MCF 10A (cell line): ENCODE measurements at regions of chr1 and their contacts with region 1.

Region 1: GRCh38 chr1:227318003-227318852 is at the start of gene CDC42BPA:
- DNase-seq: peak; percentile 96
- H3K4me3 Mint-ChIP-seq: peak within 1 kb of the TSS; percentile 86
- H3K27ac Mint-ChIP-seq: peak within 1 kb of the TSS; percentile 98
- H3K4me1 Mint-ChIP-seq: peaks cover 26% of the 10 kb centered on the region
- H3K27me3 Mint-ChIP-seq: no peaks in the 10 kb centered on the region
- CTCF ChIP-seq: no peak
- total RNA-seq, gene CDC42BPA: 88.8 and 102 TPM in 2 replicates

Region 2: GRCh38 chr1:226827968-226828513 is 490.2 kb before region 1 on chr1:
- CTCF ChIA-PET with region 1: no interaction called
- POLR2A ChIA-PET with region 1: no interaction called
- intact Hi-C with region 1: loop called (anchors 10 kb)
- DNase-seq: peak; percentile 100
- H3K4me3 Mint-ChIP-seq: no peak overlapping the region
- H3K27ac Mint-ChIP-seq: no peak overlapping the region
- H3K4me1 Mint-ChIP-seq: no peaks in the 10 kb centered on the region
- H3K27me3 Mint-ChIP-seq: no peaks in the 10 kb centered on the region
- CTCF ChIP-seq: peak; percentile 100

Region 3: DNA sequence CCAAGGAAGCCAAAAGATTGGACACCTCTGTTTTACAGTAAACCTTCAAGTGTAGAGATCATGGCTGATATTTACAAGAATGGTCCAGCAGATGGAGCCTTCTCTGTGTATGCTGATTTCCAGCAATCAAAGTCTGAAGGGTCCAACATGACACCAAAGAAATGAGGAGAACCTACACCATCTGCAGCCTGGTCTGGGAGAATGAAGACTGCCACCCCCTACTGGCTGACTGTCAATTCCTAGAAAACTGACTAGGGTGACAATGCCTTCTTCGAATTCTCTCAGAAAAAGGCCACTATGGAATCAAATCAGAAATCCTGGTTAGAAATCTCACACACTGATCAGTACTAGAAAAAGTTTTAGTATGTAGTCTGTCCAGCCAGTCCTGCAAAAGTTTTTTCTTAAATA is 83.2 kb before region 1 on chr1:
- CTCF ChIA-PET with region 1: interaction called, 11 read pairs
- POLR2A ChIA-PET with region 1: interaction called, 8 read pairs
- intact Hi-C with region 1: loop called (anchors 1 kb)
- DNase-seq: peak; percentile 84
- H3K4me3 Mint-ChIP-seq: no peak overlapping the region
- H3K27ac Mint-ChIP-seq: no peak overlapping the region
- H3K4me1 Mint-ChIP-seq: peaks cover 15% of the 10 kb centered on the region
- H3K27me3 Mint-ChIP-seq: no peaks in the 10 kb centered on the region
- CTCF ChIP-seq: peak; percentile 78

Region 4: GRCh38 chr1:227280836-227281235 is 37.4 kb before region 1 on chr1:
- CTCF ChIA-PET with region 1: no interaction called
- POLR2A ChIA-PET with region 1: interaction called, 18 read pairs
- intact Hi-C with region 1: no loop called
- DNase-seq: no peak
- H3K4me3 Mint-ChIP-seq: no peak overlapping the region
- H3K27ac Mint-ChIP-seq: peak overlapping the region; percentile 90
- H3K4me1 Mint-ChIP-seq: peaks cover 13% of the 10 kb centered on the region
- H3K27me3 Mint-ChIP-seq: no peaks in the 10 kb centered on the region
- CTCF ChIP-seq: no peak

Region 5: DNA sequence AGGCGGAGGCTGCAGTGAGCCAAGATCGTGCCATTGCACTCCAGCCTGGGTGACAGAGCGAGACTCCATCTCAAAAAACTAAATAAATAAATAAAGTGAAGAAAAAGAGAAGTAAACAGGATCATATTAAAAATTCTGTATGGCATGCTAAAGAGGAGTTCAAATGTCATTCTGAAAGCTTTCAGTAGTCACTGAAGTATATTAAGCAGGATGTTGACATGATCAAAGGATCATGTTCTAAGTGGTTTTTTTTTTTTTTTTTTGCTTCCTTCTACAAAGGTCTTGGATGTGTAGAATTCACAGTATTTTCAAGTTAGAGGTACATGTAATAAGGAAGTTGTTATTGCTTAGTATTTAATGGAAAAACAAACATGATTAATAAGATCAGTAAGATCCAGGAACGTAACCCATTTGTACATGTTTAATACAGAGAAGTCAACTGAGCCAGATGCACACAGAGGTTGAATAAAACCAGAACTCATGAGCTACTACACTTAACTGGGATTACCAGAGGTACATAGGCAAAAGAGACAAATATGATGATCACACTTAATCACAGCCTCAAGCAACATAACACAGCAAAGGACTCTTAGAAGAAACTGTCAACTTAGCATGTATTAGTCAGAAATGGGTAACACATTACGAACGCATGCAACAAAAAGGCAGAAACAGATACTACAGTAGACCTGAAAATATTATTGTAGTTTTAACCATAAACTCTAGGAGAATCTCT is 12.2 kb before region 1 on chr1:
- CTCF ChIA-PET with region 1: interaction called, 6 read pairs
- POLR2A ChIA-PET with region 1: interaction called, 175 read pairs
- intact Hi-C with region 1: no loop called
- DNase-seq: no peak
- H3K4me3 Mint-ChIP-seq: no peak overlapping the region
- H3K27ac Mint-ChIP-seq: no peak overlapping the region
- H3K4me1 Mint-ChIP-seq: peaks cover 57% of the 10 kb centered on the region
- H3K27me3 Mint-ChIP-seq: no peaks in the 10 kb centered on the region
- CTCF ChIP-seq: no peak

Region 6: GRCh38 chr1:227343727-227344551 is 25.7 kb after region 1 on chr1:
- CTCF ChIA-PET with region 1: interaction called, 10 read pairs
- POLR2A ChIA-PET with region 1: interaction called, 89 read pairs
- intact Hi-C with region 1: loop called (anchors 2 kb)
- DNase-seq: peak; percentile 96
- H3K4me3 Mint-ChIP-seq: peak overlapping the region; percentile 4
- H3K27ac Mint-ChIP-seq: peak overlapping the region; percentile 75
- H3K4me1 Mint-ChIP-seq: peaks cover 19% of the 10 kb centered on the region
- H3K27me3 Mint-ChIP-seq: no peaks in the 10 kb centered on the region
- CTCF ChIP-seq: no peak

Region 7: GRCh38 chr1:227437495-227438008 is 119.3 kb after region 1 on chr1:
- CTCF ChIA-PET with region 1: interaction called, 9 read pairs
- POLR2A ChIA-PET with region 1: interaction called, 11 read pairs
- intact Hi-C with region 1: loop called (anchors 1 kb)
- DNase-seq: peak; percentile 83
- H3K4me3 Mint-ChIP-seq: peak overlapping the region; percentile 58
- H3K27ac Mint-ChIP-seq: peak overlapping the region; percentile 53
- H3K4me1 Mint-ChIP-seq: peaks cover 16% of the 10 kb centered on the region
- H3K27me3 Mint-ChIP-seq: no peaks in the 10 kb centered on the region
- CTCF ChIP-seq: peak; percentile 80

Region 8: GRCh38 chr1:227673441-227673840 is 355.2 kb after region 1 on chr1:
- CTCF ChIA-PET with region 1: no interaction called
- POLR2A ChIA-PET with region 1: no interaction called
- intact Hi-C with region 1: no loop called
- DNase-seq: no peak
- H3K4me3 Mint-ChIP-seq: no peak overlapping the region
- H3K27ac Mint-ChIP-seq: no peak overlapping the region
- H3K4me1 Mint-ChIP-seq: no peaks in the 10 kb centered on the region
- H3K27me3 Mint-ChIP-seq: no peaks in the 10 kb centered on the region
- CTCF ChIP-seq: no peak